ENCODE measurements at regions of chr1 and their contacts with region 1.

Region 1: GRCh38 chr1:213987927-213988506 is at the start of gene PROX1:
- DNase-seq: peak in 2 of 5 donors; percentile 37 to 44
- ATAC-seq: peak; percentile 73 to 88 (median 85)
- H3K4me3 ChIP-seq: peak within 1 kb of the TSS; percentile 42 to 83 (median 64)
- H3K27ac ChIP-seq: peak within 1 kb of the TSS; percentile 56 to 94 (median 88)
- H3K4me1 ChIP-seq: peaks cover 0 to 27% (median 8%) of the 10 kb centered on the region in 12 donors
- H3K27me3 ChIP-seq: peaks cover 2 to 56% (median 36%) of the 10 kb centered on the region in 9 donors
- CTCF ChIP-seq: peak in 3 of 12 donors; percentile 8 to 24 (median 12)
- POLR2A ChIP-seq: peak; percentile 68 to 84
- total RNA-seq, gene PROX1: 44.6 to 145 (median 96.4) TPM

Region 2: GRCh38 chr1:213122514-213122929 is 865.5 kb before region 1 on chr1:
- intact Hi-C with region 1: loop called in 1 of 10 experiments (anchors 10 kb)
- DNase-seq: no peak
- ATAC-seq: no peak
- H3K4me3 ChIP-seq: no peak overlapping the region
- H3K27ac ChIP-seq: no peak overlapping the region
- H3K4me1 ChIP-seq: peaks cover 0 to 6% (median 0%) of the 10 kb centered on the region in 12 donors
- H3K27me3 ChIP-seq: no peaks in the 10 kb centered on the region
- CTCF ChIP-seq: peak; percentile 46 to 73 (median 65)
- POLR2A ChIP-seq: no peak

Region 3: GRCh38 chr1:213374369-213374768 is 613.6 kb before region 1 on chr1:
- intact Hi-C with region 1: loop called in 3 of 10 experiments (anchors 10 kb)
- DNase-seq: peak in 4 of 5 donors; percentile 28 to 55 (median 44)
- ATAC-seq: peak in 3 of 4 donors; percentile 58 to 72 (median 69)
- H3K4me3 ChIP-seq: no peak overlapping the region
- H3K27ac ChIP-seq: no peak overlapping the region
- H3K4me1 ChIP-seq: no peaks in the 10 kb centered on the region
- H3K27me3 ChIP-seq: no peaks in the 10 kb centered on the region
- CTCF ChIP-seq: peak; percentile 67 to 89 (median 82)
- POLR2A ChIP-seq: no peak

Region 4: DNA sequence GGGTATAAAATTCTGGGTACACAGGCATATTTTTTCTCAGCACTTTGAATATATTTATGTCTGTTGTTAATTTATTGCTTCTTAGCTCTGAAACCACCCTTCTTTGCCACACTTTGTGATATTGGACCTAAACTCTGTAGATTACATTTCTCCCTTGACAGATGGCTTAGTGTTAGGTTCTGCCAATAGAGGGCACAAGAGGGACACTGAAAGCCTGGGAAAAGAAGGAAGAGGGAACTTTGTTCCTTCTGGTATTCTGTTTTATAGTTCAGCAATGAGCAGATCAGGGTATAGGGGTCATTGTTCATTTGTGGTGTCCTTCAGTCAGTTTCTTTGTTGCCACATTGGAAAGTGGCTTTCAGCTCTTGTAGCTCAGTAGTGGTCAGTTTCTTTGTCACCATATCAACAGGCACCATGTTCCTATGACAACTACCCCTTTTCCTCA is 423.8 kb before region 1 on chr1:
- intact Hi-C with region 1: loop called in 5 of 10 experiments (anchors 2 to 10 kb)
- DNase-seq: no peak
- ATAC-seq: peak in 1 of 4 donors; percentile 49
- H3K4me3 ChIP-seq: no peak overlapping the region
- H3K27ac ChIP-seq: no peak overlapping the region
- H3K4me1 ChIP-seq: no peaks in the 10 kb centered on the region
- H3K27me3 ChIP-seq: no peaks in the 10 kb centered on the region
- CTCF ChIP-seq: peak; percentile 13 to 50 (median 34)
- POLR2A ChIP-seq: no peak

Region 5: DNA sequence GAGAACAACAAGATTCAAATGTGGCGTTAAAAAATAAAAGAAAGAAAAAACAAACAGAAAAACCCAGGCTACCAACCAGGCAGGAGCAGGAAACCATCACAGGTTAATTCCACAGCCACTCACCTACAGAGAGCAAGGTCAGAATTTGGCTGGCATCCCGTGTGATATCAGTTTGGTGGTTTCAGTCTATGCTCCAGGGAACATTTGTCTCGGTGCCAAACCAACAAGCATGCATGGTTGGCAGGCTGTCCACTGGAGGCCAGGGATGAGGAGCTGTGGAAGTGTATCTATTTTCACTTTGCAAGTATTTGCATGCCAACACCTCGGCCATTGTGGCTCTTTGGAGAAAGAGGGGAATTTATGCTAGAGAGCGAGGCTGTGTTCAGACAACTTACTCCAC is 53.4 kb before region 1 on chr1:
- intact Hi-C with region 1: no loop called
- DNase-seq: peak; percentile 70 to 89 (median 80)
- ATAC-seq: peak; percentile 95 to 97 (median 96)
- H3K4me3 ChIP-seq: no peak overlapping the region
- H3K27ac ChIP-seq: peak overlapping the region in 4 of 12 donors; percentile 29 to 40 (median 32)
- H3K4me1 ChIP-seq: peaks cover 0 to 17% (median 0%) of the 10 kb centered on the region in 12 donors
- H3K27me3 ChIP-seq: no peaks in the 10 kb centered on the region
- CTCF ChIP-seq: no peak
- POLR2A ChIP-seq: no peak

Region 6: DNA sequence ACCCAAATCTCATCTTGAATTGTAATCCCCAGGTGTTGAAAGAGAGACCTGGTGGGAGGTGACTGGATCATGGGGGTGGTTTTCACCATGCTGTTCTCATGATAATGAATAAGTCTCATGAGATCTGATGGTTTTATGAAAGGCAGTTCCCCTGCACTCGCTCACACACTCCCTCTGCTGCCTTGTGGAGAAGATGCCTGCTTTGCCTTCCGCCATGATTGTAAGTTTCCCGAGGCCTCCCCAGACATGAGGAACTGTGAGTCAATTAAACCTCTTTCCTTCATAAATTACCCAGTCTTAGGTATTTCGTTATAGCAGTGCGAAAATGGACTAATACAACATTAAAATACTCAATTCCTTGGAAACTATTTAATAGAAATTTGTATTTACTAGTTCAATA is 98.9 kb after region 1 on chr1:
- intact Hi-C with region 1: no loop called
- DNase-seq: no peak
- ATAC-seq: no peak
- H3K4me3 ChIP-seq: no peak overlapping the region
- H3K27ac ChIP-seq: no peak overlapping the region
- H3K4me1 ChIP-seq: no peaks in the 10 kb centered on the region
- H3K27me3 ChIP-seq: peaks cover 0 to 3% (median 0%) of the 10 kb centered on the region in 9 donors
- CTCF ChIP-seq: no peak
- POLR2A ChIP-seq: no peak

Region 7: GRCh38 chr1:214102907-214103306 is 114.9 kb after region 1 on chr1:
- intact Hi-C with region 1: loop called in 2 of 10 experiments (anchors 1 to 5 kb)
- DNase-seq: no peak
- ATAC-seq: no peak
- H3K4me3 ChIP-seq: no peak overlapping the region
- H3K27ac ChIP-seq: no peak overlapping the region
- H3K4me1 ChIP-seq: peaks cover 0 to 25% (median 3%) of the 10 kb centered on the region in 12 donors
- H3K27me3 ChIP-seq: peaks cover 0 to 3% (median 0%) of the 10 kb centered on the region in 9 donors
- CTCF ChIP-seq: no peak
- POLR2A ChIP-seq: no peak

Region 8: GRCh38 chr1:214123061-214123784 is 135.2 kb after region 1 on chr1:
- intact Hi-C with region 1: loop called in 6 of 10 experiments (anchors 5 to 10 kb)
- DNase-seq: peak in 3 of 5 donors; percentile 22 to 51 (median 35)
- ATAC-seq: peak; percentile 64 to 89 (median 86)
- H3K4me3 ChIP-seq: no peak overlapping the region
- H3K27ac ChIP-seq: peak overlapping the region in 1 of 12 donors; percentile 31
- H3K4me1 ChIP-seq: peaks cover 0 to 7% (median 0%) of the 10 kb centered on the region in 12 donors
- H3K27me3 ChIP-seq: no peaks in the 10 kb centered on the region
- CTCF ChIP-seq: peak; percentile 36 to 71 (median 60)
- POLR2A ChIP-seq: no peak

Region 9: GRCh38 chr1:215672482-215672881 is 1684.5 kb after region 1 on chr1:
- intact Hi-C with region 1: no loop called
- DNase-seq: no peak
- ATAC-seq: no peak
- H3K4me3 ChIP-seq: no peak overlapping the region
- H3K27ac ChIP-seq: no peak overlapping the region
- H3K4me1 ChIP-seq: no peaks in the 10 kb centered on the region
- H3K27me3 ChIP-seq: no peaks in the 10 kb centered on the region
- CTCF ChIP-seq: no peak
- POLR2A ChIP-seq: no peak